Mammary epithelial cell (primary cell): ENCODE measurements at regions of chr18 and their contacts with region 1.

Region 1: GRCh38 chr18:23580677-23581367 is 5.5 kb downstream of the NPC1 start:
- DNase-seq: no peak
- H3K4me3 ChIP-seq: no peak overlapping the region
- H3K27ac ChIP-seq: no peak overlapping the region
- H3K4me1 ChIP-seq: peaks cover 28% of the 10 kb centered on the region
- H3K27me3 ChIP-seq: no peaks in the 10 kb centered on the region
- CTCF ChIP-seq: no peak

Region 2: GRCh38 chr18:23020555-23021294 is 560.1 kb before region 1 on chr18:
- CTCF ChIA-PET with region 1: no interaction called
- dilution Hi-C with region 1: no loop called
- in situ Hi-C with region 1: no loop called
- intact Hi-C with region 1: no loop called
- DNase-seq: no peak
- H3K4me3 ChIP-seq: no peak overlapping the region
- H3K27ac ChIP-seq: no peak overlapping the region
- H3K4me1 ChIP-seq: no peaks in the 10 kb centered on the region
- H3K27me3 ChIP-seq: no peaks in the 10 kb centered on the region
- CTCF ChIP-seq: no peak

Region 3: GRCh38 chr18:23523429-23524220 is 57.2 kb before region 1 on chr18:
- CTCF ChIA-PET with region 1: no interaction called
- dilution Hi-C with region 1: loop called (anchors 5 kb)
- in situ Hi-C with region 1: no loop called
- intact Hi-C with region 1: loop called (anchors 2 kb)
- DNase-seq: peak; percentile 23
- H3K4me3 ChIP-seq: no peak overlapping the region
- H3K27ac ChIP-seq: no peak overlapping the region
- H3K4me1 ChIP-seq: peaks cover 3% of the 10 kb centered on the region
- H3K27me3 ChIP-seq: no peaks in the 10 kb centered on the region
- CTCF ChIP-seq: no peak

Region 4: DNA sequence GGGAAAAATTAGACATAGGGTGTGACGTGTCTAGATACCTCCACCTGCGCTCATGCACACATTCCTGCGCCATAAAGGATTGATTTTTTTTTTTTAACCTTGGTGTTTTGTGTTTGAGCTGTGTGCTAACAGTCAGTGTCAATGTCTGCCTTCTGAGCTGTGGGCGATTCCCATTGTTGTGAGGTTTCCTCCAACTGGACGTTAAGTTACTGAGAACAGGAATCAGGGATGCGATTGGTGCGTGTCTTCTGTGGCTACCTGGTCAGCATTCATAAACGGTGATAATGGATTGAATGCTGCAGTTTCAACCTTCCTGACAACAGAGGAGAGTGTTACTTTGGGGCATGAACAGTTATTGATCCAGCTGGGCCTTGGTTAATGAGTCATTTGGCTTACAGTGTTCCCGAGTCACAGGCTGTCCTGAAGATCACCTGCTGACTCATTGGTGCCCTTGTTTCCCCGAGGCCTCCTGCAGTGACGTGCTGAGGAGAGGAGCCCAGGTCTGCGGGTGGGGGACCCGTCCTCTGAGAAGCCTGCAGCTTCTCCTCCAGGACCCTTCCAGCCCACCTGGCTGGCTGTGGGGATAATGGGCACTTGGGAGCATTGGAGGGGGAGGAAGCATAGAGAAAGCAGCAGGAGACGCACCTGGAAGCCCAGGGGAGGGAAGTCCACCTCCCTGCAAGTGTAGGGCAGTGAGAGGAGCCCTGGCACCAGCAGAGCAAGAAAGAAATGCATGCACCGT is 532.2 kb after region 1 on chr18:
- CTCF ChIA-PET with region 1: no interaction called
- dilution Hi-C with region 1: no loop called
- in situ Hi-C with region 1: no loop called
- intact Hi-C with region 1: no loop called
- DNase-seq: peak; percentile 84
- H3K4me3 ChIP-seq: no peak overlapping the region
- H3K27ac ChIP-seq: no peak overlapping the region
- H3K4me1 ChIP-seq: peaks cover 16% of the 10 kb centered on the region
- H3K27me3 ChIP-seq: no peaks in the 10 kb centered on the region
- CTCF ChIP-seq: no peak

Region 5: GRCh38 chr18:24475926-24476589 is 895.2 kb after region 1 on chr18:
- CTCF ChIA-PET with region 1: no interaction called
- dilution Hi-C with region 1: no loop called
- in situ Hi-C with region 1: no loop called
- intact Hi-C with region 1: no loop called
- DNase-seq: no peak
- H3K4me3 ChIP-seq: no peak overlapping the region
- H3K27ac ChIP-seq: no peak overlapping the region
- H3K4me1 ChIP-seq: no peaks in the 10 kb centered on the region
- H3K27me3 ChIP-seq: no peaks in the 10 kb centered on the region
- CTCF ChIP-seq: no peak